Vagina (tissue), 2 donors: ENCODE measurements at regions of chr15 and their contacts with region 1.

Region 1: GRCh38 chr15:40344631-40345120 is 3.9 kb upstream of the CCDC9B start:
- DNase-seq: no peak
- H3K4me3 ChIP-seq: no peak overlapping the region
- H3K27ac ChIP-seq: no peak overlapping the region
- H3K4me1 ChIP-seq: peaks cover 46% of the 10 kb centered on the region
- H3K27me3 ChIP-seq: no peaks in the 10 kb centered on the region
- CTCF ChIP-seq: peak in 2 of 3 experiments; percentile 41 to 70
- POLR2A ChIP-seq: no peak

Region 2: DNA sequence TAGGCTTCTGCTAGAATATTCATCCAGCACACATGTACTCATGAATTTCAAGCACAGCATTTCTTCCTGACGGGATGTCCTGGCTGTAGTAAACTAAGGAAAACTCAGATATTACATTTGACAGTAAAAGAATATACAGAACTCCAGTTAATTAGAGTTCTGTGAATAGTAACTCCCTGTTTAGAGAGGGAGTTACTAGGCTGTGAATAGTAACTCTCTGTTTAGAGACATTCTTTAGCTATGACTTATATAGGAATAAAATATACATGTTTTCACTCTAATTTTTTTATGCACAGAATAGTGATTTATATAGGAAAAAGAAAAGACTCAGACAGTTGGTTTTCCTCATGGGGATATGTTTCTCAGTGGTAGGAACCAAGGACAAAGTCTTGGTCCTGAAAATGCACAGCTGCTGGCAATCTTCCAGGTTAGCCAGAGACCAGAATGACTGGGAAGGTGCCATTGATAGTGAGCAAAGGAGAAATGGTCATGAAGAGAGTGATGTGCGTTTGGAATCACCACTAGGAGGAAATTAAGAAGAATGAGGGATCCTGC is 1244.5 kb before region 1 on chr15:
- intact Hi-C with region 1: no loop called
- DNase-seq: no peak
- H3K4me3 ChIP-seq: no peak overlapping the region
- H3K27ac ChIP-seq: no peak overlapping the region
- H3K4me1 ChIP-seq: peaks cover 5% of the 10 kb centered on the region
- H3K27me3 ChIP-seq: no peaks in the 10 kb centered on the region
- CTCF ChIP-seq: no peak
- POLR2A ChIP-seq: no peak

Region 3: DNA sequence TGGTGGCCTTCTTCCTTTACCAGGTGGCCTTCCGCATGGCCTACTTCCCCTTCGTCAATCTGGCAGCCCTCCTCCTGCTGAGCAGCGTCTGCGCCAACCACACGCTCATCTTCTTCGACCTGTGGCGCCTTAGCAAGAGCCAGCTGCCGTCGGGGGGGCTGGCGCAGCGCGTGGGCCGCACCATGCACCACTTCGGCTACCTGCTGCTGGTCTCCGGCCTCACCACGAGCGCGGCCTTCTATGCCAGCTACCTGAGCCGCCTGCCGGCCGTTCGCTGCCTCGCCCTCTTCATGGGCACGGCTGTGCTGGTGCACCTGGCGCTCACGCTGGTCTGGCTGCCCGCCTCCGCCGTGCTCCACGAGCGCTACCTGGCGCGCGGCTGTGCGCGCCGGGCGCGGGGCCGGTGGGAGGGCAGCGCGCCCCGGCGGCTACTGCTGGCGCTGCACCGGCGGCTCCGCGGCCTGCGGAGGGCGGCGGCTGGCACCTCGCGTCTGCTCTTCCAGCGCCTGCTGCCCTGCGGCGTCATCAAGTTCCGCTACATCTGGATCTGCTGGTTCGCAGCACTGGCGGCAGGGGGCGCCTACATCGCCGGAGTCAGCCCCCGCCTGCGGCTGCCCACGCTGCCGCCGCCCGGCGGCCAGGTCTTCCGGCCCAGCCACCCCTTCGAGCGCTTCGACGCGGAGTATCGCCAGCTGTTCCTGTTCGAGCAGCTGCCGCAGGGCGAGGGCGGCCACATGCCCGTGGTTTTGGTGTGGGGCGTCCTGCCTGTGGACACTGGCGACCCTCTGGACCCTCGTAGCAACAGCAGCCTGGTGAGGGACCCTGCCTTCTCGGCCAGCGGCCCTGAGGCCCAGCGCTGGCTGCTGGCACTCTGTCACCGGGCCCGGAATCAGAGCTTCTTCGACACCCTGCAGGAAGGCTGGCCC is 23.3 kb after region 1 on chr15:
- intact Hi-C with region 1: no loop called
- DNase-seq: no peak
- H3K4me3 ChIP-seq: peak overlapping the region; percentile 34 to 56
- H3K27ac ChIP-seq: no peak overlapping the region
- H3K4me1 ChIP-seq: peaks cover 14% of the 10 kb centered on the region
- H3K27me3 ChIP-seq: no peaks in the 10 kb centered on the region
- CTCF ChIP-seq: peak; percentile 52 to 81 (median 54)
- POLR2A ChIP-seq: no peak

Region 4: DNA sequence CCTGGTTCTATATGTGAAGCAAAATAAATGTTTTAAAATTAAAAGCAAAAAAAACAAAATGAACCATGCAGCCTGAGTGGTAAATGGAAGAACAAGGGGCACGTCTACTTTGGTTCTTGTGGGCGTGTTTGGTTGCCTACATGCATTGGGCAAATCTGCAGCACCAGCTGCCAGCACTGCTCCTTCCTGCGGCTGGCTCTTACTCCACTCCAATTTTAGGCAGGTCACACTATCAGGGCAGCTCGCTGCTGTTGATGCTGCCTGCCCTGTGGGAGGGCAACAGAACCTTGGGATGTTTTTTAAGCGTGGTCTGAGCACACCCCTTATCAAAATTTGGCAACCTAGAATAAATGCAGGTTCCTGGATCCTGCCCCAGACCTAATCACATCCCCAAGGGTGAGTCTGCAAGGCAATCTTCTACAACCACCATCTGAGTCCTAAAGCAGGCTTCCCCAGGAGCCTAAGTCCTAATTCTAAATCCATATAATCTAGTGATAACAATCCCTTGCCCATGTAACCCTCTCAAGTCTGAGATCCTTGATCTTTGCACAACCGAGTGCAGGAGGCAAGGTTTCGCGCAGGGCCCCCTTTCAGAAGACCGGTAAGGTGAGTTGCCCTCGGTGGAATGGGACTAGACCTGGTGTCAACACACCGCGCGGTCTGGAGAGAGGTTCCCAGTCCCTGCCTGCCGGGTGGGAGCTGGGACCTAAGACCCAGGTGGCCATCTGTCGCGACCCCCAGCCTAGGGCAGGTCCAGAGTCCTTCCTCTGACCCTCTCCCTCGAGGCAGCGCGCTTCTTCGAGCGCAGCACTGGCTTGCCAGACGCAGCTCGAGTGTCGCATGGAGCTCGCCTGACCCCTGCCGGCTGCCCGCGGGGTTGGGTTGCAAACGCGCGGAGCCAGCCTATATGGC is 76.8 kb after region 1 on chr15:
- intact Hi-C with region 1: loop called (anchors 10 kb)
- DNase-seq: no peak
- H3K4me3 ChIP-seq: no peak overlapping the region
- H3K27ac ChIP-seq: no peak overlapping the region
- H3K4me1 ChIP-seq: peaks cover 11% of the 10 kb centered on the region
- H3K27me3 ChIP-seq: no peaks in the 10 kb centered on the region
- CTCF ChIP-seq: peak; percentile 78 to 91 (median 90)
- POLR2A ChIP-seq: no peak